ENCODE measurements at regions of chr15 and their contacts with region 1.

Region 1: GRCh38 chr15:70833897-70834765 is 19.8 kb downstream of the LARP6 start:
- DNase-seq: peak; percentile 81
- H3K4me3 Mint-ChIP-seq: peak overlapping the region; percentile 36
- H3K27ac Mint-ChIP-seq: peak overlapping the region; percentile 97
- H3K4me1 Mint-ChIP-seq: peaks cover 59% of the 10 kb centered on the region
- H3K27me3 Mint-ChIP-seq: no peaks in the 10 kb centered on the region
- CTCF ChIP-seq: no peak

Region 2: GRCh38 chr15:70156671-70157271 is 677.4 kb before region 1 on chr15:
- CTCF ChIA-PET with region 1: no interaction called
- intact Hi-C with region 1: no loop called
- DNase-seq: no peak
- H3K4me3 Mint-ChIP-seq: no peak overlapping the region
- H3K27ac Mint-ChIP-seq: no peak overlapping the region
- H3K4me1 Mint-ChIP-seq: peaks cover 8% of the 10 kb centered on the region
- H3K27me3 Mint-ChIP-seq: peaks cover 68% of the 10 kb centered on the region
- CTCF ChIP-seq: no peak

Region 3: DNA sequence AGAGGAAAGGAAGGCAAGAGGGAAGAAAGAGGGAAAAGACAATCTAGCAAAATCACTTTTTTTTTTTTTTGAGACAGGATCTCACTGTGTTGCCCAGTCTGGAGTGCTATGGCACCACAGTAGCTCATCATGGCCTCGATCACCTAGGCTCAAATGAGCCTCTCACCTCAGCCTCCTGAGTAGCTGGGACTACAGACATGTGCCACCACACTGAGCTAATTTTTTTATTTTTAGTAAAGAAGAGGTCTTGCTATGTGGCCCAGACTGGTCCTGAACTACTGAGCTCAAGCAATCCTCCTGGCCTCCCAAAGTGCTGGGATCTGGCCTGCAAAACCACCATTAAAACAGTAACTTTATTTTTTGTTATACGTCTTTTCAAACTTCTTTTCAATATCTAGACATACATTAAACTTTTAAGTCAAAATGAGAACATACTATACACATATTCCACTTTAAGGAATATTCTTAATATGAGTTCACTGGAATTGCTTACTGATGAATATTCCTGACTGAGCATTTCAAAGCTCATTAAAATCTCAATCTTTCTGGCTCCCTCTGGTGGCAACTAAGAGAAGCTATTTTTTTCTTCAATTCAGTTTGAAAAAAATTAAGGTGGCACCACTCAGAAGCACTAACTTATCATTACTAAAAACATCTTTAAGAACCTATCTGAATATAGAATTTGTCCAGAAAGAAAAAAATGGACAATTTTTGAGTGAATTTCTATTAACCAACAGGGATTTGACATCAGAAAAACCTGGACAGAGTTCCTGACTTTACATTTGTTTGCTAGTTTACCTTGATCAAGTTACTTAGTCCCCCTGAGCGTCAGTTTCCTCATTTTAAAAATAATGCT is 111.6 kb before region 1 on chr15:
- CTCF ChIA-PET with region 1: no interaction called
- intact Hi-C with region 1: no loop called
- DNase-seq: no peak
- H3K4me3 Mint-ChIP-seq: no peak overlapping the region
- H3K27ac Mint-ChIP-seq: no peak overlapping the region
- H3K4me1 Mint-ChIP-seq: peaks cover 8% of the 10 kb centered on the region
- H3K27me3 Mint-ChIP-seq: no peaks in the 10 kb centered on the region
- CTCF ChIP-seq: peak; percentile 61

Region 4: GRCh38 chr15:70806992-70807712 is 27.0 kb before region 1 on chr15:
- CTCF ChIA-PET with region 1: interaction called, 12 read pairs
- intact Hi-C with region 1: no loop called
- DNase-seq: no peak
- H3K4me3 Mint-ChIP-seq: no peak overlapping the region
- H3K27ac Mint-ChIP-seq: no peak overlapping the region
- H3K4me1 Mint-ChIP-seq: no peaks in the 10 kb centered on the region
- H3K27me3 Mint-ChIP-seq: no peaks in the 10 kb centered on the region
- CTCF ChIP-seq: no peak

Region 5: DNA sequence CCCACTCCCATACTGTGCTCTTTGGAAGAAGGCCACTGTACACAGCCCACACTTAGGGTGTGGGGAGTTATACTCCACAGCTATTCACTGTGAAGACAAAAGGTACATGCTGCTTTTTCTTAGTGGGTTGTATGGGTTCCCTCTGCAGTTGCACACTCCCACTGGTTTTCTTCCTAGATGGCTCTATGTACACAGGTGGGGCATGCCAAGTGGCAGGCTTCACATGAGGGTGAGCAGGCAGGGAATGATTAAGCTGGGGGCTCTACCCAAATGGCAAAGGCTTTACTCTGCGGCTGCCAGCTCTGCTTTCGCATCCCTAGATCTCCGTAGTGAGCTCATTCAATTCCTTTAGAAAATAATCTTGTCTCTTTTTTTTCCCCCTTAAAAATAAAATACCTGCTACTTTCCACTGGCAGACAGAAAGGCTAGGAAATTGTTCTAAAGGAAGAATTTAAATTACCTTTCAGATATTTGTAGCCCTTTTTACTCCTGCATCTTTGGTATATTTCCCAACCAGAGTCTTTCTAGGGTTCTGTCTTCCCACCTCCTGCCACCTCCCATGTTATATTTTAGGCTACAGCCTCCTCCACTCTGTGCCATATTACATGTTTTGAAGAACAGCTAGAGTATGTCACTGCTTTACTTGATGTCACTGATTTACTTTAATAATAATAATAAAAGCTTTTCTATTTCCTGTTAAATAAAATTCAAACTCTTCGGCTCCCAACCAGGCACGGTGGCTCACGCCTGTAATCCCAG is 11.7 kb after region 1 on chr15:
- CTCF ChIA-PET with region 1: no interaction called
- intact Hi-C with region 1: no loop called
- DNase-seq: no peak
- H3K4me3 Mint-ChIP-seq: no peak overlapping the region
- H3K27ac Mint-ChIP-seq: no peak overlapping the region
- H3K4me1 Mint-ChIP-seq: peaks cover 7% of the 10 kb centered on the region
- H3K27me3 Mint-ChIP-seq: no peaks in the 10 kb centered on the region
- CTCF ChIP-seq: no peak

Measured in Calu3 (cell line).